PC-3 (cell line): ENCODE measurements at regions of chr2 and their contacts with region 1.

Region 1: DNA sequence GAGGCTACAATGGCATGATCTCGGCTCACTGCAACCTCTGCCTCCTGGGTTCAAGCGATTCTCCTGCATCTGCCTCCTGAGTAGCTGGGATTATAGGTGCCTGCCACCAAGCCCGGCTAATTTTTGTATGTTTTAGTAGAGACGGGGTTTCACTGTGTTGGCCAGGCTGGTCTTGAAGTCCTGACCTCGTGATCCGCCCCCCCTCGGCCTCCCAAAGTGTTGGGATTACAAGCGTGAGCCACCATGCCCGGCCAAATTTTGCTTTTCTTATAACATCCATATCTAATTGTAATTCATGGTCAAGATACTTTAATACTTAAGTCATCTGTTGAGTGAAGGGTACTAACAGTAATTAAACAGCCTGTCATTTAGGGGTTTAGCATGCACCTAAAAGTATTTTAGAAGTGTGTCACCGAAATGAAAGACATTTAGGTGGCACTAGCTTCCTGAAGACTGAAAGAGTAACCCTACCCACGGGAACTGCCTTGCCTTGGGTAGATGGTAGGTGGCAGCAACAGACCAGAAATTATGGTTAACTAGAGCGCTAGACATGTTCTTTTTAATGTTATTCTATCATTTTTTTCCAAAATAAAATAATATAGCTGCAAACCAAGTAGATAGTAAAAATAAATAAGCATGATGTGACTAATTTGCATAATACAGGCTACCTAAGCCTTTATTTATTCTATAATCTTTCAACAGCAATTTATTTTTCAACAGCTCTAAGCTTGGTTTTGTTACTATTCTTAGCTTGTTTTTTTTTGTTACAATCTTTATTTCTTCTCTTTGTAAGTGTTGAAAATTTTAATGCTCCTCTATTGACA is 8.6 kb upstream of the ACYP2 start:
- DNase-seq: peak; percentile 81
- ATAC-seq: peak; percentile 72
- H3K4me3 ChIP-seq: peak overlapping the region; percentile 58
- H3K27ac ChIP-seq: no peak overlapping the region
- H3K4me1 ChIP-seq: peaks cover 26% of the 10 kb centered on the region
- H3K27me3 ChIP-seq: no peaks in the 10 kb centered on the region
- CTCF ChIP-seq: peak; percentile 91

Region 2: GRCh38 chr2:53949457-53949856 is 157.4 kb before region 1 on chr2:
- CTCF ChIA-PET with region 1: interaction called, 11 read pairs
- POLR2A ChIA-PET with region 1: no interaction called
- intact Hi-C with region 1: no loop called
- DNase-seq: peak; percentile 41
- ATAC-seq: peak; percentile 83
- H3K4me3 ChIP-seq: no peak overlapping the region
- H3K27ac ChIP-seq: no peak overlapping the region
- H3K4me1 ChIP-seq: peaks cover 6% of the 10 kb centered on the region; the same call in 1 of the 2 replicates
- H3K27me3 ChIP-seq: no peaks in the 10 kb centered on the region
- CTCF ChIP-seq: no peak

Region 3: DNA sequence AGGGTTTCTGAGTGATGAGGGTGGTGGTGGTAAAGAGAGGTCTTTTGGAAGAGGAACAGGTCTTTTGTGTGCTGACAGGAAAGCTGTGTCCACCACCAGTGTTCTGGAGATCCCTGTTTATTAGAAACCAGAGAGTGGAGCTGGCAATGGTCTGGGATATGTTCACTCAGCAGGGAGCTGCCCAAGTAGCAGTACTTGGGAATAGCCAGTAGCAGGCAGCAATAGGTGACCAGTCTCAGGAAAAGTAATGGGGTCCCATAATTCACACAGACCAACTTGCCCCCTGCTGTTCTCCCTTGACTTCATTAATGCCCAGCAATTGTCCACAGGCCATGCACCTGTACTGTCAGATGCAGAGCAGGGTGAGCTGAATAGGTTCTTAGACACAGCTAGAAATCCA is 147.3 kb after region 1 on chr2:
- CTCF ChIA-PET with region 1: no interaction called
- POLR2A ChIA-PET with region 1: no interaction called
- intact Hi-C with region 1: no loop called
- DNase-seq: no peak
- ATAC-seq: no peak
- H3K4me3 ChIP-seq: no peak overlapping the region
- H3K27ac ChIP-seq: no peak overlapping the region
- H3K4me1 ChIP-seq: no peaks in the 10 kb centered on the region
- H3K27me3 ChIP-seq: no peaks in the 10 kb centered on the region
- CTCF ChIP-seq: no peak

Region 4: DNA sequence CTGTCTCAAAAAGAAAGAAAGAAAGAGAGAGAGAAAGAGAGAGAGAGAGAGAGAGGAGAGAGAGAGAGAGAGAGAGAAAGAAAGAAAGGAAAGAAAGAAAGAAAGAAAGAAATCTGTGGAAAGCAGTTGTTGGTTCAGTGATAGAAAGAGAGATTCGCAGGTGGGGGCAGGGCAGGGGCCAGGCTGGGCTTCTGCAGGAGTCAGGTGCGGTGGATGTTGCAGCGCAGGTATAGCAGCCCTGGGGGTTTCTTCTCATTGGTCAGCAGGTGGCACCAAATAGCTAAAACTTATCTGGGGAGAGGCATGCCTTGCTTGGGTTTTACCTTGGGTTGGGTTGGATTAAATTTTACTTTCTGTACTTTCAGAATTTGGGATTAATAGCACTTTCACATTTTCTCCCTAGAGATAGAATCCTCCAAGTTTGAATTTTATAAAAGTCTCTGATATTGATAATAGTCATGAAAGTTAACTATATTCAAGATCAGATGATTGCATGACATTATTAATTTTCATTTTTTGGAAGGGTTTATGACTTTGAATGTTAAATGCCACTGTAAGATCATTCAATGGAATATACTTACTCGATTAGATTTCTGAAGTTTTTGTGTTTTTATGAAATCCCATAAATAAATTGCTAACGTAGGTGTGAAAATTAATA is 415.9 kb after region 1 on chr2:
- CTCF ChIA-PET with region 1: interaction called, 3 read pairs
- POLR2A ChIA-PET with region 1: no interaction called
- intact Hi-C with region 1: loop called (anchors 5 kb)
- DNase-seq: peak; percentile 88
- ATAC-seq: peak; percentile 79
- H3K4me3 ChIP-seq: no peak overlapping the region
- H3K27ac ChIP-seq: peak overlapping the region; percentile 28
- H3K4me1 ChIP-seq: peaks cover 35% of the 10 kb centered on the region
- H3K27me3 ChIP-seq: no peaks in the 10 kb centered on the region
- CTCF ChIP-seq: peak; percentile 79

Region 5: GRCh38 chr2:54657664-54658083 is 550.8 kb after region 1 on chr2:
- CTCF ChIA-PET with region 1: interaction called, 3 read pairs
- POLR2A ChIA-PET with region 1: no interaction called
- intact Hi-C with region 1: loop called (anchors 5 kb)
- DNase-seq: peak; percentile 66
- ATAC-seq: peak; percentile 84
- H3K4me3 ChIP-seq: no peak overlapping the region
- H3K27ac ChIP-seq: no peak overlapping the region
- H3K4me1 ChIP-seq: no peaks in the 10 kb centered on the region
- H3K27me3 ChIP-seq: no peaks in the 10 kb centered on the region
- CTCF ChIP-seq: peak; percentile 68